Activated T-helper 2 cell treated with anti-CD3 and anti-CD28 coated beads, Interferon-gamma antibody, Interleukin-2, Interleukin-4, amounts not matched to agents 10 μg/mL and 5 μg/mL and 100 μg/mL, durations not matched to agents 14 hours and 24 hours and 36 hours (primary cell): ENCODE measurements at regions of chr3 and their contacts with region 1.

Region 1: GRCh38 chr3:10224784-10225665 is 23.2 kb upstream of the TATDN2 start:
- DNase-seq: peak; percentile 37
- H3K4me3 Mint-ChIP-seq: peak overlapping the region; percentile 47
- H3K27ac Mint-ChIP-seq: peak overlapping the region; percentile 86
- H3K4me1 Mint-ChIP-seq: peaks cover 61% of the 10 kb centered on the region
- H3K27me3 Mint-ChIP-seq: no peaks in the 10 kb centered on the region

Region 2: GRCh38 chr3:9542182-9542581 is 682.8 kb before region 1 on chr3:
- intact Hi-C with region 1: no loop called
- DNase-seq: no peak
- H3K4me3 Mint-ChIP-seq: no peak overlapping the region
- H3K27ac Mint-ChIP-seq: no peak overlapping the region
- H3K4me1 Mint-ChIP-seq: no peaks in the 10 kb centered on the region
- H3K27me3 Mint-ChIP-seq: peaks cover 2% of the 10 kb centered on the region

Region 3: GRCh38 chr3:10142707-10143566 is 82.1 kb before region 1 on chr3:
- intact Hi-C with region 1: loop called (anchors 1 kb)
- DNase-seq: no peak
- H3K4me3 Mint-ChIP-seq: peak overlapping the region; percentile 94
- H3K27ac Mint-ChIP-seq: peak overlapping the region; percentile 92
- H3K4me1 Mint-ChIP-seq: peaks cover 24% of the 10 kb centered on the region
- H3K27me3 Mint-ChIP-seq: no peaks in the 10 kb centered on the region

Region 4: DNA sequence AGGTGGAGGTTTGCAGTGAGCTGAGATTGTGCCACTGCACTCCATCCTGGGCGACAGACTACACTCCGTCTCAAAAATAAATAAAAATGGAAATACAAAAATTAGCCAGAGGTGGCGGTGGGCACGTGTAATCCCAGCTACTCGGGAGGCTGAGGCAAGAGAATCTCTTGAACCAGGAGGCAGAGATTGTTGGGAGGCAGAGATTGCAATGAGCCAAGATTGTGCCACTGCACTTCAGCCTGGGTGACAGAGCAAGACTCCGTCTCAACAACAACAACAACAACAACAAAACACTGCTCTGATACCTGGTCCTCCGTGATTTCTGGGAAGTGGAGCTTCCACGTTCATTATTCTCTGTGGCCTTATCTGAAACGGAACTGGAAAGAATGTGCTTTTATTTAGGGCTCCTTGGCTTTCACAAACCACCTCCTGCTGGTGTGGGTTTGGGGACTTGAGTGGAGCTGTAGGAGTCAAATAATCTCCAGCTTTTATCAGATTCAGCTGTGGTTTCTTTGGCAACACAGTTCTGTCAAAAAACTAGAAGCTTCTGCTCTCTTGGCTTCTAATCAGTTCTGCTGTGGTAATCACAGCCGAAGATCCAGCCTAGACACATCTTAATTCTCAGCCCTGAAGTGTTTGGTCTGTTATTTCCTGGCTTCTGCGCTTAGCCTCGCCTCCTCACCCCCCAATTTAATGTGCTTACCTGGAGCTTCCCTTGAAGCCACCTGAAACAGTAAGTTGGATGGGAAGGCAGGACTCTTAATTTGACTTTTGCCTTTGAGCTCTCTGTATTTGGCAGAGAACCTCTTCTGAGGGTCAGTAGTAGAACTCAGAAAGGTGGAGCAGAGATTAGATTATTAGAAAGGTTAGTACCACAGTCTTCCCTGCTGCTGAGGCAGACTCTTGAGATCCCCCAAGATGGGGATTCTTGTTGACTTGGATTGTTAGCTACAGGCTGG is 38.9 kb before region 1 on chr3:
- intact Hi-C with region 1: loop called (anchors 1 kb)
- DNase-seq: peak; percentile 25
- H3K4me3 Mint-ChIP-seq: peak overlapping the region; percentile 9
- H3K27ac Mint-ChIP-seq: peak overlapping the region; percentile 66
- H3K4me1 Mint-ChIP-seq: peaks cover 53% of the 10 kb centered on the region
- H3K27me3 Mint-ChIP-seq: no peaks in the 10 kb centered on the region

Region 5: DNA sequence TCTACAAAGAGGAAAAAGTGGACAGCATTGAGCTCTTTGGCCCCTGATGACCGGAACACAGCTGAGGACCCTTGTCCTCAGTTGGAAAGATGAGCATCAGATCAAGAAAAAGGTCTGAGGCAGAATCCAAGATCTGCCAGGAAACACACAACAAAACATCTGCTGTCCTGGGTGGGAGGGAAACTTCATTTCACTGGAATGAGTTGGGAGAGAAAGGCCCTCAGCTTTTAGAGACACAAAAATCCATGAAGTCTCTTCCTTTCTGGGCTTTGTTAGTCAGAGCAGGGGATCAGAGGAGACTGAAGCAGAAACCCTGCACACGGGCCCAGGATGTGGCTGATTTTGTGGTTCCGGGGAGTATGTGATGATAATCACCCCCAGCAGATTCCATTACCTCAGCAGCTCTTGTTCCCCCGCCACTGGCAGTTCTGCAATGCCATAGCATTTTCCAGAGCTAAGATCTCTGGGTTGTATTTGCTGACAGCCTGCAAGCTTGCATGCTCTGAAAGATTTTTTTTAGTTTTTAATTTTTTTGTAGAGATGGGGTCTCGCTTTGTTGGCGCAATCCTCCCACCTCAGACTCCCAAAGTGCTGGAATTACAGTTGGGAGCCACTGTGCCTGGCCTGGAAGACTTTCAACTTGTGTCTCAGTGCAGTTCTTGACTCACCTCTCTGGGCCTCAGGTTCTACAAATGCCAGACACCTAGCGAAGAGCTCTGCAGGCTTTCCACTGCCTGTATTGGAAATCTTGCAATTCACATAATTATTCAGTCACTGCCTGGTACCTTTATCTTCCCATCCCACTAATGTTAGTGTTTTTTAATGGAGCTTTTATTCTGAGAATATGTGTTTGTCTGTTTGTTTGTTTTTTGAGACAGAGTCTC is 17.4 kb after region 1 on chr3:
- intact Hi-C with region 1: loop called (anchors 1 kb)
- DNase-seq: peak; percentile 85
- H3K4me3 Mint-ChIP-seq: peak overlapping the region; percentile 55
- H3K27ac Mint-ChIP-seq: peak overlapping the region; percentile 97
- H3K4me1 Mint-ChIP-seq: peaks cover 53% of the 10 kb centered on the region
- H3K27me3 Mint-ChIP-seq: no peaks in the 10 kb centered on the region